H1 (cell line): ENCODE measurements at regions of chr1 and their contacts with region 1.

Region 1: GRCh38 chr1:15038232-15039016 is 115.1 kb upstream of the TMEM51 start:
- DNase-seq: no peak
- H3K4me3 ChIP-seq: no peak overlapping the region
- H3K27ac ChIP-seq: no peak overlapping the region
- H3K4me1 ChIP-seq: no peaks in the 10 kb centered on the region
- H3K27me3 ChIP-seq: no peaks in the 10 kb centered on the region
- CTCF ChIP-seq: peak; percentile 51 to 75 (median 65)
- EP300 ChIP-seq: no peak
- POLR2A ChIP-seq: no peak
- RAD21 ChIP-seq: peak; percentile 53 to 57

Region 2: DNA sequence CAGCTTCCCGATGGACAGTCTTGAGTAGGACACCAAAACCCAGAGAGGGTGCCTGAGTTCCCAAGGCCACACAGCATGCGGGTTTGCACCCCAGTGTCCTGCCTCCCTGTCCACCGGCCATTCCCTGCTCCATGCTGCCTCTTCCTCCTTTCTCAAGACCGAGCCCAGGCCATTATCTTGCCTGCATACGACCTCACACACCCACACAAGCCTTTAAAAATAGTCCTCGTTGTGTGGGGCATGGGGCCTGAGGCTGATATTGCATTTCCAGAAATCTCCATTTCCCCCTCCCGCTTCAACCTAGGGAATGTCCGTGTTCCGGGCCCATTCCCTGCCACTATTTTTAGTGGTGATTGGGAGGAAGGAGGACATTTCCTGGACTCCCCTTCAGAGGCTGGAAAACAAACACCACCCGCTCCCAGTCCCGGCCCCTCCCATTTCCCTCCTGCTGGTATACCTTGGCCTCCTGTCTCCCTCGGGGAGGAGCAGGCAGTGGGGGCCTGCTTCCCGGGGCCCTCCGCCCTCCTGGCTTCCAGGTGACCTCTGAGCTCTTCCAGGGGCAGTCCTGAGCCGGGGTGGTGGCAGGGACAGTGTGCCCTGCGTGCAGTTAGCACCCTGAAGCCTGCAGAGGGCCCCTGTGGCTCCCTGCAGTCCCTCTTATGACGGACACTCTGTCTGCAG is 17.2 kb before region 1 on chr1:
- CTCF ChIA-PET with region 1: interaction called, 32 read pairs
- POLR2A ChIA-PET with region 1: no interaction called
- DNase-seq: no peak
- H3K4me3 ChIP-seq: no peak overlapping the region
- H3K27ac ChIP-seq: no peak overlapping the region
- H3K4me1 ChIP-seq: peaks cover 0 to 8% (median 0%) of the 10 kb centered on the region in 4 experiments; a peak in 3 of 7 replicates
- H3K27me3 ChIP-seq: no peaks in the 10 kb centered on the region
- CTCF ChIP-seq: no peak
- EP300 ChIP-seq: no peak
- POLR2A ChIP-seq: no peak
- RAD21 ChIP-seq: no peak

Region 3: GRCh38 chr1:15088281-15088971 is 50.0 kb after region 1 on chr1:
- CTCF ChIA-PET with region 1: no interaction called
- POLR2A ChIA-PET with region 1: no interaction called
- DNase-seq: no peak
- H3K4me3 ChIP-seq: no peak overlapping the region
- H3K27ac ChIP-seq: no peak overlapping the region
- H3K4me1 ChIP-seq: peaks cover 4 to 10% (median 4%) of the 10 kb centered on the region in 4 experiments
- H3K27me3 ChIP-seq: no peaks in the 10 kb centered on the region; a peak in 2 of 7 replicates
- CTCF ChIP-seq: no peak
- EP300 ChIP-seq: no peak
- POLR2A ChIP-seq: no peak
- RAD21 ChIP-seq: no peak